Dendritic cell treated with granulocyte-macrophage colony-stimulating factor and Interleukin-4, amounts not matched to agents 40 ng/mL and 50 ng/mL, for 4 days (primary cell): ENCODE measurements at regions of chr17 and their contacts with region 1.

Region 1: DNA sequence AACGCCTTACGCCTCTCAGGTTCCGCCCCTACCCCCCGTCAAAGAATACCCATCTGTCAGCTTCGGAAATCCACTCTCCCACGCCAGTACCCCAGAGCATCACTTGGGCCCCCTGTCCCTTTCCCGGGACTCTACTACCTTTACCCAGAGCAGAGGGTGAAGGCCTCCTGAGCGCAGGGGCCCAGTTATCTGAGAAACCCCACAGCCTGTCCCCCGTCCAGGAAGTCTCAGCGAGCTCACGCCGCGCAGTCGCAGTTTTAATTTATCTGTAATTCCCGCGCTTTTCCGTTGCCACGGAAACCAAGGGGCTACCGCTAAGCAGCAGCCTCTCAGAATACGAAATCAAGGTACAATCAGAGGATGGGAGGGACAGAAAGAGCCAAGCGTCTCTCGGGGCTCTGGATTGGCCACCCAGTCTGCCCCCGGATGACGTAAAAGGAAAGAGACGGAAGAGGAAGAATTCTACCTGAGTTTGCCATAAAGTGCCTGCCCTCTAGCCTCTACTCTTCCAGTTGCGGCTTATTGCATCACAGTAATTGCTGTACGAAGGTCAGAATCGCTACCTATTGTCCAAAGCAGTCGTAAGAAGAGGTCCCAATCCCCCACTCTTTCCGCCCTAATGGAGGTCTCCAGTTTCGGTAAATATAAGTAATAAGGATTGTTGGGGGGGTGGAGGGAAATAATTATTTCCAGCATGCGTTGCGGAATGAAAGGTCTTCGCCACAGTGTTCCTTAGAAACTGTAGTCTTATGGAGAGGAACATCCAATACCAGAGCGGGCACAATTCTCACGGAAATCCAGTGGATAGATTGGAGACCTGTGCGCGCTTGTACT is at the start of gene BRCA1:
- H3K4me3 Mint-ChIP-seq: peak within 1 kb of the TSS; percentile 96
- H3K27ac Mint-ChIP-seq: peak within 1 kb of the TSS; percentile 76
- H3K4me1 Mint-ChIP-seq: peaks cover 49% of the 10 kb centered on the region
- H3K27me3 Mint-ChIP-seq: no peaks in the 10 kb centered on the region

Region 2: GRCh38 chr17:43024407-43025289 is 100.7 kb before region 1 on chr17 and contains the start of gene RND2:
- intact Hi-C with region 1: loop called (anchors 5 kb)
- H3K4me3 Mint-ChIP-seq: peak within 1 kb of the TSS; percentile 79
- H3K27ac Mint-ChIP-seq: peak within 1 kb of the TSS; percentile 83
- H3K4me1 Mint-ChIP-seq: peaks cover 42% of the 10 kb centered on the region
- H3K27me3 Mint-ChIP-seq: peaks cover 16% of the 10 kb centered on the region

Region 3: GRCh38 chr17:43104665-43105064 is 20.7 kb before region 1 on chr17:
- intact Hi-C with region 1: no loop called
- H3K4me3 Mint-ChIP-seq: no peak overlapping the region
- H3K27ac Mint-ChIP-seq: no peak overlapping the region
- H3K4me1 Mint-ChIP-seq: no peaks in the 10 kb centered on the region
- H3K27me3 Mint-ChIP-seq: no peaks in the 10 kb centered on the region